ENCODE measurements at regions of chr20 and their contacts with region 1.

Region 1: DNA sequence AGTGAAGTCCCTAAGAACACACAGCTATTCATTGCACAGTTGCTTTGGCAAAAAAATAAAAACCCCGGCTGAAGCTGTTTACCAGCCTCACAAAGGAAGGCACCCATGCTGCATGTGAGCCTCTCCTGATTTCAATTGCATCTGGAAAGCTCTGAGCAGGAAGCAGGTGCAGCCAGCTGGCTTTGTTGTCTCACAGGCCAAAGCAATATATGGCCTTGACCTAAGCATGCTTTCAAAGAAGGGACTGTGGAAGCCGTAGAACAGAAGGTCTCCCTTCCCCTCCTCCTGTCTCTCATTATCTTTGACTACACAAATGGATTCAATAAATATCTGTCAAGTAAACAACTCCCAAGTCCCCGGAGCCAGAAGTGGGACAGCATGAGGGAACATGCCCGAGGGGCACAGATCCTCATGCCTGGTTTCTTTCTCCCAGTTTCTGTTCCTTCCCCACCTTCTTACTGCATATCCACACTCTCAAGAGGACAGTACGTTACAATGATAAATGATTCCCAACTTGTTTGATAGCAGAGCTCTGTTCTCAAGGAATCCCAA is 57.2 kb upstream of the PCSK2 start:
- DNase-seq: no peak
- ATAC-seq: no peak
- H3K4me3 ChIP-seq: no peak overlapping the region
- H3K27ac ChIP-seq: no peak overlapping the region
- H3K4me1 ChIP-seq: no peaks in the 10 kb centered on the region
- H3K27me3 ChIP-seq: no peaks in the 10 kb centered on the region
- CTCF ChIP-seq: no peak

Region 2: GRCh38 chr20:17226410-17227218 is 57.0 kb after region 1 on chr20 and contains the start of gene PCSK2:
- intact Hi-C with region 1: loop called in 2 of 10 experiments (anchors 10 kb)
- DNase-seq: peak; percentile 15 to 26
- ATAC-seq: peak in 7 of 8 donors; percentile 46 to 74 (median 69)
- H3K4me3 ChIP-seq: peak within 1 kb of the TSS in 9 of 10 donors; percentile 19 to 42 (median 29)
- H3K27ac ChIP-seq: no peak within 1 kb of the TSS
- H3K4me1 ChIP-seq: peaks cover 0 to 17% (median 5%) of the 10 kb centered on the region in 9 donors
- H3K27me3 ChIP-seq: peaks cover 6 to 95% (median 62%) of the 10 kb centered on the region in 7 donors
- CTCF ChIP-seq: no peak
- total RNA-seq, gene PCSK2: 0.09 to 1.4 (median 0.97) TPM in 9 of 10 donors, not detected in the other

Region 3: GRCh38 chr20:17233626-17234025 is 64.0 kb after region 1 on chr20:
- intact Hi-C with region 1: loop called in 2 of 10 experiments (anchors 10 kb)
- DNase-seq: no peak
- ATAC-seq: no peak
- H3K4me3 ChIP-seq: no peak overlapping the region
- H3K27ac ChIP-seq: no peak overlapping the region
- H3K4me1 ChIP-seq: no peaks in the 10 kb centered on the region
- H3K27me3 ChIP-seq: peaks cover 0 to 31% (median 11%) of the 10 kb centered on the region in 7 donors
- CTCF ChIP-seq: no peak

Measured in heart right ventricle (tissue), 16 donors.